Sciatic nerve (tissue), 2 donors: ENCODE measurements at regions of chr16 and their contacts with region 1.

Region 1: GRCh38 chr16:2874912-2875362 is 8.1 kb upstream of the FLYWCH2 start:
- DNase-seq: peak; percentile 87
- ATAC-seq: peak; percentile 98

Region 2: DNA sequence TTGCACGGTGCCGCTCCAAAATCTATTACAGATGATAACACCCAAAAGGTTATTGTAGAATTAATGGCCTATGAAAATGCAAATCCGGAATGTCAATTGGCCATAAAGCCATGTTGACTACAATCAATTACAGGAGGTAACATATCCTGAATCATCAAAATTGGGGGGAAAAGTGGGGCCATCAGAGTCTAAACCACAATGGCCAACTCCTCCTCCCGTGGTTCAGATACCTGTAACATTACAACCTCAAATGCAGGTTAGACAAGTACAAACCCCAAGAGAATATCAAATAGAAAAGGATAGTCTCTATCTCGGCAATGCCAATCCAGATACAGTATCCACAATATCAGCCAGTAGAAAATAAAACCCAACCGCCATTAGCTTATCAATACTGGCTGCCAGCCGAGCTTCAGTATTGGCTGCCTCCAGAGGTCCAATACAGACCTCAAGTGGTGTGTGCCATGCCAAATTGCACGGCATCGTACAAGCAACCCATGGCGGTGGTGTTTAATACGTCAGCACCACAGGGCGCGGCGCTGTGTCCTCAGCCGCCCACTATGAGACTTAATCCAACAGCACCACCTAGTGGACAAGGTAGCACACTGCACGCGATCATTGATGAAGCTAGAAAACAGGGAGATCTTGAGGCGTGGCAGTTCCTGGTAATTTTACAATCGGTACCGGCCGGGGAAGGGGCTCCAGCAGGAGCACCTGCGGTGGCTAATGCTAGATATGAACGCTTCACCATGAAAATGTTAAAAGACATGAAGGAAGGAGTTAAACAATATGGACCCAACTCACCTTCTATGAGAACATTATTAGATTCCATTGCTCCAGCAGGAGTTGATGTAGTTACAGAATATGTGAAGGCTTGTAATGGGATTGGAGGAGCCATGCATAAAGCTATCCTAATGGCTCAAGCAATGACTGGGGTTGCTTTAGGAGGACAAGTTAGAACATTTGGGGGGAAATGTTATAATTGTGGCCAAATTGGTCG is 52.0 kb after region 1 on chr16:
- intact Hi-C with region 1: loop called (anchors 10 kb)
- DNase-seq: peak; percentile 91
- ATAC-seq: peak; percentile 96

Region 3: GRCh38 chr16:3717235-3718018 is 842.5 kb after region 1 on chr16 and contains the start of gene TRAP1:
- intact Hi-C with region 1: no loop called
- DNase-seq: peak; percentile 93
- ATAC-seq: peak; percentile 97
- total RNA-seq, gene TRAP1: 73.6 TPM